ENCODE measurements at regions of chr10 and their contacts with region 1.

Region 1: DNA sequence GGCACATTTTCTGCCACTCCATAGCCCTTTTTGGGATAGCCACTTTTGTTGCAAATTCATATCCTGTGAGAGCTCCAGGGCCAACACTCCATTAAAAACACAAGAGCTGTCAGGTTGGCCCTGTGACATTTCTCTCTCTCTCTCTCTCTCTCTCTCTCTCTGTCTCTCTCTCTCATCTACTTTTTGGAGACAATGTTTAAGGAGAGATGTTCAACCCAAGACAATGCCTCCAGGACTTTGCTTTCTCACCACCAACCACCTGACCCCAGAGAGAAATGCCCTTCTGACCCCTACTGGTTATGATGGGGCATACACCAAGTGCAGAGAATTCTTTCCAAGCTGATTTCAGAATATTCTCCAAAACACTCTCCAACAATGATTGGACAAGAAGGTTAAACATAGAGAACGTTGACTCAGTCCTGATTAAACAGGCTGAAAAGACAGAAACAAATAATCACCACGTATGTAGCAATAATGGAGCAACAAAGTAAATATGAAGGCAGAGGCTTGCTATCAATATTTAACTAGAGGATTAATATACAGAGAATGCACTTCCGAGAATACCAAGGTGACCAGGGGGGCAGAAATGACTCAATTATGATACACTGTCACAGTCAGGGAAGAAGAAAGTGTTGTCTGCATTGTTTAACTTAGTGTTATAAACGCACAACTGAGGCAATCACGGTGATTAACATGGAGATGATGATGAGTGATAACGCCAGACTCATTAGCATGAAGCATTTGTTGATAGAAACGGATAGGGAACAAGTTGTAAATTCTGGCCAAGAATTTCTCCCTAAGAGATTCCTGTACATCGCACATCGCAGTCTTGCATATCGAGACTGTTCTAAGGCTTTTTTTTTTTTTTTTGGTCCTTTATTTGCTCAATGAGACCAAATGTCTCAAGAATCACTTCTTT is 178.5 kb downstream of the NRP1 start:
- DNase-seq: peak; percentile 55
- H3K4me3 Mint-ChIP-seq: no peak overlapping the region
- H3K27ac Mint-ChIP-seq: no peak overlapping the region
- H3K4me1 Mint-ChIP-seq: peaks cover 35% of the 10 kb centered on the region
- H3K27me3 Mint-ChIP-seq: no peaks in the 10 kb centered on the region

Region 2: GRCh38 chr10:32795598-32796183 is 360.3 kb before region 1 on chr10:
- CTCF ChIA-PET with region 1: no interaction called
- intact Hi-C with region 1: loop called (anchors 1 kb)
- DNase-seq: peak; percentile 17
- H3K4me3 Mint-ChIP-seq: no peak overlapping the region
- H3K27ac Mint-ChIP-seq: no peak overlapping the region
- H3K4me1 Mint-ChIP-seq: no peaks in the 10 kb centered on the region
- H3K27me3 Mint-ChIP-seq: no peaks in the 10 kb centered on the region

Region 3: DNA sequence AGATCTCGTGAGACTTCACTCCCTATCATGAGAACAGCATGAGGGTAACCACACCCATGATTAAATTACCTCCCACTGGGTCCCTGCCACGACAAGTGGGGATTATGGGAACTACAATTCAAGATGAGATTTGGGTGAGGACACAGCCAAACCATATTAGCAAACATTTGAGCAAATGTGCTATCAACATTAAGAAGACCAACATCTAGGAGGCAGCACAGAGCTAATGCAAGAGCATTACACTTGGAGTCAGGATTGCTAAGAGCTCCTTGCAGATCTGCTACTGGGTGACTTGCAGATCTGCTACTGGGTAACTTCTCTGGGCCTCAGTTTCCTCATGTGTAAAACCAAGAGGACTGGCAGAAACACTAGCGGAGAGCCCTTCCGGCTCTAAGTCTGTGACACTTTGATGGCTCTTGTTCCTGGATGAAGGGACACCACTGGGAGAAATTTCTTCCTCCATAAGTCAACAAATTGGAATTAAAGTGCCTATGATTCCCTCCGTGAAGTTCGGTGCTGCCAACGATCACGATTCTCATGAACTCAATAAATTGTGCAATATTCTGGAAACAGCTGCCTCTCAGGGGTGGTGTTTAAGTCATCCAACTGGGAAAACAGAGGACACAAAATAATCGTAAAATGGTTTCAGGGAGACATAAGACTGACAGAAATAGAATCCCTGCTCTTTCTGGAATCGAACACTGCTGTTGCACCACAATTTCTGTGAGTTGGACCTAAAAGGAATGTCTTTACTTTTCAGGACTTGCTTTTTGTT is 82.2 kb before region 1 on chr10:
- CTCF ChIA-PET with region 1: interaction called, 9 read pairs
- intact Hi-C with region 1: loop called (anchors 2 kb)
- DNase-seq: no peak
- H3K4me3 Mint-ChIP-seq: no peak overlapping the region
- H3K27ac Mint-ChIP-seq: no peak overlapping the region
- H3K4me1 Mint-ChIP-seq: no peaks in the 10 kb centered on the region
- H3K27me3 Mint-ChIP-seq: no peaks in the 10 kb centered on the region

Region 4: DNA sequence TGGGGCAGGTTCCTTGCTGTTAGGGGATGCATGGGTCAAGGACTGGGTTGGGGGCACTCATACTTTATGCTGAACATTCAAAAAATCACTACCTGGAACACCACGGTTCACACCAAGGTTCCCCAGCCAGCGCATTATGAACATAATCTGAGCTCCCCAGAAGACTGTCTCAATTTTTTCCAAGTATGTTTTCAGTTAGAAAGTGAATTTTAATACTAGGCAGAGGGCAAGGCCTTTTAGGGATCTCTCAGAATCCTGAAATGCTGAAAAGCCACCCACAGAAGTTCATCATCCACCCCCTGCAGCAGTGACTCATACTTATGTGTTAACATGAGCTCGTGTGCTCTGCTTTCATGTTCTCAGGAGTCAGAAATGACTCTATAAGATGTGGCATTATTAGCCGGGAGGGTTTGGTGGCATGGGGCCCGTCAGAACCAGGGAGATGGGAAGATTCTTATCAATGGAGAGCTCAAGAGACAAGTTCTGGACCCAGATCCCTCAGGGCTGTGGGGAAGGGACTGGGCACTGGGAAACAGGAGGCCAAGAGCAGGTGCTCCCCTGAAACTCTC is 12.7 kb before region 1 on chr10:
- CTCF ChIA-PET with region 1: interaction called, 7 read pairs
- intact Hi-C with region 1: loop called (anchors 1 kb)
- DNase-seq: peak; percentile 82
- H3K4me3 Mint-ChIP-seq: no peak overlapping the region
- H3K27ac Mint-ChIP-seq: peak overlapping the region; percentile 50
- H3K4me1 Mint-ChIP-seq: peaks cover 52% of the 10 kb centered on the region
- H3K27me3 Mint-ChIP-seq: no peaks in the 10 kb centered on the region

Region 5: DNA sequence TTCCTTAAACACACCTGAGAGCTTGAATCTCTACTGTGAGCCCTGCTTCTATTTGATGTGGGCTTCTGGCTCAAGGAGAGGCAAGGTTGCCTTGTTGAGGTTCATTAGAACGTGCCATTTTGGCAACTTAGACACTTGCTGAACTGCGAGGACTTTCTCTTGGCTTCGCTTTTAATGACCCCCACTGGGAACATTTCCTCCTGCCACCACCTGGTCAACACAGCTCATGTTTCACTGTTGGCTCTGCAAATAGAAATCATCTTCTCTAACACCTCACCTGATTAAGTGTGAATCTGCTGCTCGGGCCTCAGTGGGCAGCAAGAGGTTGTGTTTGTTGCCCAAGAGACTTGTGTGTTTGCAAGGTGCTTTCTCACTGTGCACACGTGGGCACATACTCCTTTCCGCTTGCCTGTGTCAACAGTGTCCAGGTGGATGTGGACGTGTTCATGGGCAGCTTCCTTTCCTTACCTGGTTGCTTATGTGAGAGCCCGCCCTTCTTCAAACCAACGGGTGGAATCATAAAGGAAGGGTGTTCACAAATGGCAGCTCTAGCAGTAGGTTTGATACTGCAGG is 31.5 kb after region 1 on chr10:
- CTCF ChIA-PET with region 1: no interaction called
- intact Hi-C with region 1: no loop called
- DNase-seq: no peak
- H3K4me3 Mint-ChIP-seq: no peak overlapping the region
- H3K27ac Mint-ChIP-seq: no peak overlapping the region
- H3K4me1 Mint-ChIP-seq: no peaks in the 10 kb centered on the region
- H3K27me3 Mint-ChIP-seq: no peaks in the 10 kb centered on the region

Region 6: GRCh38 chr10:33234831-33235237 is 78.9 kb after region 1 on chr10:
- CTCF ChIA-PET with region 1: no interaction called
- intact Hi-C with region 1: no loop called
- DNase-seq: no peak
- H3K4me3 Mint-ChIP-seq: no peak overlapping the region
- H3K27ac Mint-ChIP-seq: no peak overlapping the region
- H3K4me1 Mint-ChIP-seq: no peaks in the 10 kb centered on the region
- H3K27me3 Mint-ChIP-seq: no peaks in the 10 kb centered on the region

Region 7: DNA sequence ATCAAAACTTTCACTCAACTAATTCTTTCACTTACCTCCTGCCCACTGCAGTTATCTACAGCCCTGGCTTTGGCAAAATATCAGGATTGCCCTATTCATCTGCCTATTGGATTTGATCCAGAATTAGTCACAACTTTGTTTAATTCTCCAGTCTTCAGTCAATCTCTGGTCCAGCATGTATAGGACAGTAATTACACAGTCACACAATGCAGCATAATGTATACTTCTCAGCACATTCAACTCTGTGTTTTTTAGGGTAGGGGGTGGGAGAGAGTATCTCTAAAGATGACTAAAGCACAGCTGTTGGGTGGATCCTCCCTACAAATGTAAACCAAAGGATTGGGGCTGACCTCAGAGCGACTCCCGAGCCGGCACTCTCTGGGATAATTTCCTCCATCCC is 196.2 kb after region 1 on chr10:
- CTCF ChIA-PET with region 1: no interaction called
- intact Hi-C with region 1: no loop called
- DNase-seq: no peak
- H3K4me3 Mint-ChIP-seq: no peak overlapping the region
- H3K27ac Mint-ChIP-seq: no peak overlapping the region
- H3K4me1 Mint-ChIP-seq: no peaks in the 10 kb centered on the region
- H3K27me3 Mint-ChIP-seq: peaks cover 4% of the 10 kb centered on the region

Measured in activated naive CD4-positive, alpha-beta T cell treated with anti-CD3 and anti-CD28 coated beads for 36 hours (primary cell).